Activated naive CD8-positive, alpha-beta T cell treated with anti-CD3 and anti-CD28 coated beads, Interleukin-2, amount 10 ng/mL, durations not matched to agents 7 days and 5 days (primary cell): ENCODE measurements at regions of chr2 and their contacts with region 1.

Region 1: GRCh38 chr2:64988420-64989125 is 626 bp upstream of the SLC1A4 start:
- DNase-seq: peak; percentile 79
- ATAC-seq: peak; percentile 41
- H3K4me3 Mint-ChIP-seq: peak overlapping the region; percentile 87
- H3K27ac Mint-ChIP-seq: peak overlapping the region; percentile 79
- H3K4me1 Mint-ChIP-seq: peaks cover 47% of the 10 kb centered on the region
- H3K27me3 Mint-ChIP-seq: peaks cover 9% of the 10 kb centered on the region

Region 2: GRCh38 chr2:64914735-64915509 is 73.7 kb before region 1 on chr2:
- POLR2A ChIA-PET with region 1: interaction called, 24 read pairs
- DNase-seq: no peak
- ATAC-seq: no peak
- H3K4me3 Mint-ChIP-seq: no peak overlapping the region
- H3K27ac Mint-ChIP-seq: no peak overlapping the region
- H3K4me1 Mint-ChIP-seq: peaks cover 24% of the 10 kb centered on the region
- H3K27me3 Mint-ChIP-seq: peaks cover 2% of the 10 kb centered on the region

Region 3: DNA sequence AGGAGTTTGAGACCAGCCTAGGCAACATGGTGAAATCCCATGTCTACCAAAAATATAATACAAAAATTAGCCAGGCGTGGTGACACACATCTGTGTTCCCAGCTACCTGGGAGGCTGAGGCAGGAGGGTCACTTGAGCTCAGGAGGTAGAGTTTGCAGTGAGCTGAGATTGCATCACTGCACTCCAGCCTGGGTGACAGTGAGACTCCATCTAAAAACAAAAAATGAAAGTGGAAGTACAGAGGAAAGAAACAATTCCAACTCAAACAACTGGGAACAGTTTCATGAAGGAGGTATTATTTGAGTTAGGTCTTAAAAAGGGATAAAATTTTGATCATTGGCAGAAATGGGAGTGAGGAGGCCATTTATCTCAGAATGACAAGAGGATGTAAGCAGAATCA is 147.7 kb after region 1 on chr2:
- POLR2A ChIA-PET with region 1: no interaction called
- DNase-seq: no peak
- ATAC-seq: no peak
- H3K4me3 Mint-ChIP-seq: no peak overlapping the region
- H3K27ac Mint-ChIP-seq: no peak overlapping the region
- H3K4me1 Mint-ChIP-seq: peaks cover 6% of the 10 kb centered on the region
- H3K27me3 Mint-ChIP-seq: peaks cover 12% of the 10 kb centered on the region